ENCODE measurements at regions of chr11 and their contacts with region 1.

Region 1: DNA sequence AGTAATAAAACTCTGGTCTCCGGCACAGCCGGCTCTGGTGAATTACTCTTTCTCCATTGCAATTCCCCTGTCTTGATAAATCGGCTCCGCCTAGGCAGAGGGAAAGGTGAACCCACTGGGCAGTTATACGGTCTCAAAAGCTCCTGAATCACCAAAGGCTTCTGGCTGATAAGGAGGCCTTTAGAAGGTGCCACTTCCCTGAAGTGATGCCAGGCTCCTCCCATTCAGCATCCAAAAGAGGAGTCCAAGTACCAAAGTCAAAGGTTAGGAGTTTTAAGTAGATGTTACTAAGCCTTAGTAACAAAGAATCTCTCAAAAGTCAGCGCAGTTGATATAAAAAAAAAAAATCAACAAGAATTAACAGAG is 11.8 kb upstream of the ALKBH8 start:
- DNase-seq: no peak
- H3K4me3 ChIP-seq: no peak overlapping the region
- H3K27ac ChIP-seq: no peak overlapping the region
- H3K4me1 ChIP-seq: no peaks in the 10 kb centered on the region
- H3K27me3 ChIP-seq: no peaks in the 10 kb centered on the region
- CTCF ChIP-seq: no peak
- POLR2A ChIP-seq: no peak

Region 2: GRCh38 chr11:107689317-107690202 is 112.2 kb after region 1 on chr11:
- intact Hi-C with region 1: loop called (anchors 5 kb)
- DNase-seq: peak; percentile 72
- H3K4me3 ChIP-seq: no peak overlapping the region
- H3K27ac ChIP-seq: no peak overlapping the region
- H3K4me1 ChIP-seq: no peaks in the 10 kb centered on the region
- H3K27me3 ChIP-seq: no peaks in the 10 kb centered on the region
- CTCF ChIP-seq: peak in 5 of 6 experiments; percentile 23 to 68 (median 66)
- POLR2A ChIP-seq: no peak